ENCODE measurements at regions of chr2 and their contacts with region 1.

Region 1: GRCh38 chr2:127591221-127591923 is 54.6 kb upstream of the GPR17 start:
- DNase-seq: peak; percentile 71
- H3K4me3 Mint-ChIP-seq: no peak overlapping the region
- H3K27ac Mint-ChIP-seq: no peak overlapping the region
- H3K4me1 Mint-ChIP-seq: peaks cover 4% of the 10 kb centered on the region
- H3K27me3 Mint-ChIP-seq: no peaks in the 10 kb centered on the region

Region 2: DNA sequence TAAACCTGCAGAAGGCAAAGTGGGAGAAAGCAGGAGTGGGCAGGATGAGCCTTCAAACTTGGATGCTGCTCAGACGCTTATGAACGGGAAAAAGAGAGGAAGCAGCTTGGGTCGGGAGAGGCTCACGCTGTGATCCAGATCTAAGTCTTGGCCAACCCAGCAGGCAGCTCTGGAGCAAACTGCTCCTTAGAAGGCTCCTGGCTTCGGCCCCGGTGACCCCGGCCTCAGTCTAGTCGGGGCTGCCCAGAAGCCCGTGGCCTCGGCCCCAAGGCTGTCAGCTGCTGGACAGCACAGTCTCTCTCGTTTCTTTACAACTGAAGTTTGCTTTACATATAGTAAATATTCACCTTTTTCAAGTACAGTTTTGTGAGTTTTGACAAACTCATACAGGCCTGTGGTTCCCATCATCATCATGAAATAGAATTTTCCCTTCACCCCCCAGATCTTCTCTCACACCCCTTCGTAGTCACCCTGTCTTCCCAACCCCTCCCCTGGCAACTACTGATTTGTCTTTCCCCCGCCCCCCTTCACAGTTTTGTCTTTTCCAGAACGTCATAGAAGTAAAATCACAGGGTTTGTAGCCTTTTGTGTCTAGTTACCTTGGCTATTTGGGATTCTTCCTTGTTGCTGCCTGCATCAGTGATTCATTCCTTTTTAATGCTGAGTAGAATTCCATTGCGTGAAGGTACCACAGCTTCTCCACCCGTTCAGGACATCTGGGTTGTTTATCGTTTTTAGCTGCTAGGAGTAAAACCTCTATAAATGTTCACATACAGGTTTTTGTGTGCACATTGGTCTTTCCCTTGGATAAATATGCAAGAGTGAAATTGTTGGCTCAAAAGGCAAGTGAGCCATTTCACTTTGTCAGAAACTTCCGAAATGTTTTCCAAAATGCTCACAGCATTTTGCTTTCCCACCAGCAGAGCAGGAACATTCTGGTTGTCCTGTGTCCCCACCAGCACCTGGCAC is 20.8 kb before region 1 on chr2:
- CTCF ChIA-PET with region 1: no interaction called
- POLR2A ChIA-PET with region 1: no interaction called
- intact Hi-C with region 1: no loop called
- DNase-seq: no peak
- H3K4me3 Mint-ChIP-seq: no peak overlapping the region
- H3K27ac Mint-ChIP-seq: no peak overlapping the region
- H3K4me1 Mint-ChIP-seq: no peaks in the 10 kb centered on the region
- H3K27me3 Mint-ChIP-seq: peaks cover 5% of the 10 kb centered on the region

Region 3: GRCh38 chr2:127605691-127606263 is 14.4 kb after region 1 on chr2:
- CTCF ChIA-PET with region 1: interaction called, 15 read pairs
- POLR2A ChIA-PET with region 1: no interaction called
- intact Hi-C with region 1: no loop called
- DNase-seq: no peak
- H3K4me3 Mint-ChIP-seq: no peak overlapping the region
- H3K27ac Mint-ChIP-seq: no peak overlapping the region
- H3K4me1 Mint-ChIP-seq: no peaks in the 10 kb centered on the region
- H3K27me3 Mint-ChIP-seq: peaks cover 1% of the 10 kb centered on the region

Region 4: GRCh38 chr2:127640082-127641072 is 49.0 kb after region 1 on chr2:
- CTCF ChIA-PET with region 1: interaction called, 28 read pairs
- POLR2A ChIA-PET with region 1: no interaction called
- intact Hi-C with region 1: loop called (anchors 2 kb)
- DNase-seq: peak; percentile 69
- H3K4me3 Mint-ChIP-seq: peak overlapping the region; percentile 64
- H3K27ac Mint-ChIP-seq: peak overlapping the region; percentile 70
- H3K4me1 Mint-ChIP-seq: peaks cover 43% of the 10 kb centered on the region
- H3K27me3 Mint-ChIP-seq: no peaks in the 10 kb centered on the region

Region 5: DNA sequence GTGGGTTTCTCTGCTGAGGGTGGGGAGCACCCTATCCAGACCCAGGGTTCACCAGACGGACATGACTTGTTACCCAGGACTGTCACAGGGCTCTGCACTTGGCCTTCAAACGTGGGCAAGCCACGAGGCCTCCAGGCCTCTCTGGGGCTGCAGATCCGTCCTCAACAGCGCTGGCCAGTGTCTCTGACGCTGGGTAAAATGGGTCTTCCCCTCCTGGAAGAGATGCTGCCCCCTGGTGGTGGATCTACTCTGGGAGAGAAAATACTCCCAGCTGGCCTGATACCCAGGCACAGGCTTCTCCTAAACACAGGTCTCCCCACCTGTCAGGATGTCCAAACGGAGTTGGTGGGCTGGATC is 58.3 kb after region 1 on chr2:
- CTCF ChIA-PET with region 1: interaction called, 99 read pairs
- POLR2A ChIA-PET with region 1: no interaction called
- intact Hi-C with region 1: loop called (anchors 1 kb)
- DNase-seq: peak; percentile 83
- H3K4me3 Mint-ChIP-seq: no peak overlapping the region
- H3K27ac Mint-ChIP-seq: no peak overlapping the region
- H3K4me1 Mint-ChIP-seq: peaks cover 7% of the 10 kb centered on the region
- H3K27me3 Mint-ChIP-seq: no peaks in the 10 kb centered on the region

Region 6: GRCh38 chr2:127701193-127701650 is 109.8 kb after region 1 on chr2 and contains the start of gene SFT2D3:
- CTCF ChIA-PET with region 1: interaction called, 8 read pairs
- POLR2A ChIA-PET with region 1: no interaction called
- intact Hi-C with region 1: loop called (anchors 5 kb)
- DNase-seq: peak; percentile 95
- H3K4me3 Mint-ChIP-seq: peak within 1 kb of the TSS; percentile 92
- H3K27ac Mint-ChIP-seq: peak within 1 kb of the TSS; percentile 95
- H3K4me1 Mint-ChIP-seq: peaks cover 37% of the 10 kb centered on the region
- H3K27me3 Mint-ChIP-seq: no peaks in the 10 kb centered on the region
- total RNA-seq, gene SFT2D3: 3.1 to 3.6 TPM

Region 7: DNA sequence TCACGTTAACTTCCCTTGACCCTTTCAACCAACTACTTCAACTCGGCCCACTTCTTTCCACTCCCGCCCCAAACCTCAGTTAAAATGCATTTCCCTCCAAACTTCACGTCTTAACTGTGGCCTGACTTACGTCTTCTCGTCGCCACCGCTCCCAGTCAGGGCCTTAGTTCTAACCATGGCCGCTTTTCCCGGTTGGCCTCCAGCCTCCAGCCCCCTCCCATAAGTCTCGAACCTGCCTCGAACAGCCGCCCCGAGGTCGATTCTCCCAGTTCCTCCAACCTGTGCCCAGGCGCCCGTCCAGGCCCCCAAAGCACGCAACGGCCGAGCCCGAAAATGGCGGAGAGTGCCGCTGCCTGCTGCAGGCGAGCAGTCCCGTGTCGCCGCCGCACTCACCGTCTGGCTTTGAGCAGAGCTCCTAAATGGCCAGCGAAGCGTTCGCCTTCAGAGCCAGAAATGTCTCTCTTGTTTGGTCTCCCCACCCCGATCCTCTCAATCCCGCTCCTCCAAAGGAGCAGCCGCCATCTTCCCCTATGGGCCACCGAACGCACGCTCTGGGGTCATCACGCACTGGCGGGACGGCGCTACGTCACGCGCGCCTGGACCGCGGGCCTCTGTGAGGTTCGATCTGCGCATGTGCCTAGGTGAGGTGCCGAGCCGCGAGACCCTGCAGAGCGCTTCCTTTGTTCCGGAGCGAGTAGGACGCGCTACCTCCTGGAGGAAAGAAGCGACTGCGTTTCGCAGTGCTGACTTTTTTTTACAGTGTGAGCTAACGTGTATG is 219.4 kb after region 1 on chr2 and contains the start of gene WDR33:
- CTCF ChIA-PET with region 1: no interaction called
- POLR2A ChIA-PET with region 1: no interaction called
- intact Hi-C with region 1: loop called (anchors 10 kb)
- DNase-seq: peak; percentile 97
- H3K4me3 Mint-ChIP-seq: peak within 1 kb of the TSS; percentile 92
- H3K27ac Mint-ChIP-seq: peak within 1 kb of the TSS; percentile 98
- H3K4me1 Mint-ChIP-seq: peaks cover 42% of the 10 kb centered on the region
- H3K27me3 Mint-ChIP-seq: no peaks in the 10 kb centered on the region
- total RNA-seq, gene WDR33: 62.9 to 64.7 TPM

Region 8: DNA sequence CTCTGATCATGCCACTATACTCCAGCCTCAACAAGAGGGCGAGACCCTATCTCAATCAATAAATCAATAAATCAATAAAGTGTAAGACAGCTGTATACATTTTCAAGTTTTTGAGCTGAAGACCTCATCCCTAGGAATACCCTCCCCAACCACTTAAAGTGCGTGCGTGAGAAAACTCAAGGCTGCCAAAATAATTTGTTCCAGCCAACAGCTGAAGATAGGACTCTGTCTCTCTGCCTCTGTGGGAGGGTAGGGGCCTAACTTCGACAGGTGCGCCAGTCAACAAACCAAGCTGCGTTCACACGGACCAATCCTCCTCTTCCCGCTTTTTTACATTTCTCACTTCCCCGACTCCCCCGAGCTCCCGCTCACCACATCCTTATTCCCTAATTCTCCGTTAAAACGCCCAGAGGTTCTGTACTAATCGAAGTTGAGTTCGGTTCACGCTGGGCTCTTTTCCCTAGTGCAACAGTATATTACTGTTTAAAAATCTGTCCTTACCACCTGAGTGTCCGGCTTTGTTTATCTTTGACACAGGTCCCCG is 266.0 kb after region 1 on chr2:
- CTCF ChIA-PET with region 1: interaction called, 3 read pairs
- POLR2A ChIA-PET with region 1: no interaction called
- intact Hi-C with region 1: loop called (anchors 5 kb)
- DNase-seq: peak; percentile 14
- H3K4me3 Mint-ChIP-seq: peak overlapping the region; percentile 88
- H3K27ac Mint-ChIP-seq: peak overlapping the region; percentile 77
- H3K4me1 Mint-ChIP-seq: peaks cover 51% of the 10 kb centered on the region
- H3K27me3 Mint-ChIP-seq: no peaks in the 10 kb centered on the region

Measured in activated CD4-positive, alpha-beta memory T cell treated with anti-CD3 and anti-CD28 coated beads for 36 hours (primary cell).